ENCODE measurements at regions of chr10 and their contacts with region 1.

Region 1: DNA sequence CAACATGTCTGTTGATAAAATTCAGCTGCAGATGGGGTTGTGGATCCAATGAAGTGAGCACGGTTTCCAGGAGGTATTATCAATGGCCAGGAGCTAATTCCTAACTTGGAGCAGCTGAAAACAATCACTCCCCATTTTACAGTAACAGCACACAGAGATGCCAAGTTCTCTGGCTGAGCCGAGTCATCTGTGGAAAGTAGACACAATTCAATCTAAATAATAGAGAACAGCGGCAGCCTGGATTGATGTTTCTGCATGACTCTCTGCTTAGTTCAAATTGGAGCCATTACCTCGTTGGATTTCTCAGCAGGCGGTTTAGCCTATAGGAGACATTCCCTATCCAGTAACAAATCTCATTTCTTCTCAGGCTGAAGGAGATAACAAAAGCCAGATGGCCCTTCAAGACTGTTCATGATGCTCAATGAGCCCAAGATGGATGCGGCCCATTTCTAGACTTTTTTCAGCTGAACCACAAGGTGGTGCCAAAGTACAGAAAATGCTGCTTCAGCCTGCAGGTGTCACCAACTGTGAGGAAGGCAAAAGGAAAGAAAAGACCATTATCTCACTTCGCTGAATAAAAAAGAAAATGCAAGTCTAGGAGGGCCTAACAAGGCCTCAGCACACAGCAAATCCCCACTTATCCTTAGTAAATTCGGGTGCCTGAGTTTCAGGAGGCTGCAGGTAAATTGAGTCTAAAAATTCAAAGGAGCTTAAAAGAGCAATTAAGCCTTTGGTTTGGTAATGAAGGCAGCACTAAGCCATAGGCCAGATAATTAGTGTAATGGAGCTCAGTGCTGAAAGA is 83.7 kb downstream of the SLC16A9 start:
- DNase-seq: peak; percentile 66
- H3K4me3 Mint-ChIP-seq: no peak overlapping the region
- H3K27ac Mint-ChIP-seq: no peak overlapping the region
- H3K4me1 Mint-ChIP-seq: peaks cover 5% of the 10 kb centered on the region
- H3K27me3 Mint-ChIP-seq: peaks cover 4% of the 10 kb centered on the region
- CTCF ChIP-seq: peak; percentile 81

Region 2: GRCh38 chr10:58531084-58531695 is 1094.7 kb before region 1 on chr10:
- CTCF ChIA-PET with region 1: interaction called, 3 read pairs
- POLR2A ChIA-PET with region 1: no interaction called
- intact Hi-C with region 1: loop called (anchors 10 kb)
- DNase-seq: peak; percentile 81
- H3K4me3 Mint-ChIP-seq: no peak overlapping the region
- H3K27ac Mint-ChIP-seq: peak overlapping the region; percentile 87
- H3K4me1 Mint-ChIP-seq: peaks cover 24% of the 10 kb centered on the region
- H3K27me3 Mint-ChIP-seq: no peaks in the 10 kb centered on the region
- CTCF ChIP-seq: peak; percentile 84

Region 3: DNA sequence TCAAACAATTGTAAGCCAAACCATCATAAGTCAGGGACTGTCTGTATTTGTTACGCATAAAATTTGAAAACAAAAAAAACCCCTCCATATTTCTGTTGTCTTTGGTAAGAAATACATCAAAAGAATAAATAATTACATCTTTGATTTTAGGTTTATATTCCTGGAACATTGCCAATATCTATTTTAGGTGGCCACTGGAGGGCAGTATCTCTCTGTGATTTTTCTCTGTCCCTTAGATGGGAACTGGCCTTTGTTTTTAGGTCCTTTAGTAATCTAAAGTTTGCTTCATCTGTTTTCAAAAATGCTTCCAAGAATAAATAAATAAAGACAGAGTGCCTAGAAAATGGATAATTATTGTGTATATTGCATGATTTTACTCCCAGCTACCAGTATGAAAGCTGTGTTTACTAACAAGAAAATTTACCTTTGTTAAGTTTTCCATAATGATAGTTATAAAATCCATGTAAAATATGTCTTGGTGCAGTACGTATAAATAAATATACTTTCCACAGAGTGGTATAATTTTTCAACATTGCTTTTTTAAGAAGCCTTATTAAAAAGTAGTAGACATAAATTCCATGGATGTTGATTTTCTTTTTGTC is 385.2 kb before region 1 on chr10:
- CTCF ChIA-PET with region 1: interaction called, 92 read pairs
- POLR2A ChIA-PET with region 1: interaction called, 3 read pairs
- intact Hi-C with region 1: loop called (anchors 2 kb)
- DNase-seq: peak; percentile 56
- H3K4me3 Mint-ChIP-seq: no peak overlapping the region
- H3K27ac Mint-ChIP-seq: no peak overlapping the region
- H3K4me1 Mint-ChIP-seq: no peaks in the 10 kb centered on the region
- H3K27me3 Mint-ChIP-seq: peaks cover 79% of the 10 kb centered on the region
- CTCF ChIP-seq: peak; percentile 58

Region 4: DNA sequence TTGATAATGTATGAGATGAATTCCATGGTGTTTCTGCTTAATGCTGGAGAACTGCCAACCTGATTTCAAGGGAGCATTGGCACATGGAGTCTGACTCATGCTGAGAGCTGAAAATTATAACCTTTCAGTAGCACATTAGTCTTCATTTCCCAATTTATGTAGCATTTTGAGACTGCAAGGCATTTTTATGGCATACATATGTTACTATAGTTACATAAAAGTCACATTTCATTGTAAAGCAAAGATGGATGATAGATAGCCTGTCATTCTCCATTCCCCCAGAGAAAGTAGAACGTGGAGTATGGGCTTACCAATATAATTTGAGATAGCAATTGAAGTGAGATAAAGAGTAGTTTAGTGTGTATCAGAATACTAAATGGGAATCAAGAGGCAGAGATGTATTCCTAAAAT is 19.4 kb before region 1 on chr10:
- CTCF ChIA-PET with region 1: interaction called, 31 read pairs
- POLR2A ChIA-PET with region 1: no interaction called
- intact Hi-C with region 1: no loop called
- DNase-seq: peak; percentile 79
- H3K4me3 Mint-ChIP-seq: no peak overlapping the region
- H3K27ac Mint-ChIP-seq: no peak overlapping the region
- H3K4me1 Mint-ChIP-seq: peaks cover 10% of the 10 kb centered on the region
- H3K27me3 Mint-ChIP-seq: no peaks in the 10 kb centered on the region
- CTCF ChIP-seq: no peak

Region 5: GRCh38 chr10:59830601-59831259 is 204.8 kb after region 1 on chr10:
- CTCF ChIA-PET with region 1: interaction called, 63 read pairs
- POLR2A ChIA-PET with region 1: no interaction called
- intact Hi-C with region 1: loop called (anchors 1 kb)
- DNase-seq: peak; percentile 65
- H3K4me3 Mint-ChIP-seq: no peak overlapping the region
- H3K27ac Mint-ChIP-seq: no peak overlapping the region
- H3K4me1 Mint-ChIP-seq: no peaks in the 10 kb centered on the region
- H3K27me3 Mint-ChIP-seq: no peaks in the 10 kb centered on the region
- CTCF ChIP-seq: peak; percentile 70

Region 6: GRCh38 chr10:59960751-59961150 is 334.8 kb after region 1 on chr10:
- CTCF ChIA-PET with region 1: no interaction called
- POLR2A ChIA-PET with region 1: no interaction called
- intact Hi-C with region 1: no loop called
- DNase-seq: no peak
- H3K4me3 Mint-ChIP-seq: no peak overlapping the region
- H3K27ac Mint-ChIP-seq: no peak overlapping the region
- H3K4me1 Mint-ChIP-seq: peaks cover 5% of the 10 kb centered on the region
- H3K27me3 Mint-ChIP-seq: no peaks in the 10 kb centered on the region
- CTCF ChIP-seq: no peak

Region 7: GRCh38 chr10:60048091-60048501 is 422.2 kb after region 1 on chr10:
- CTCF ChIA-PET with region 1: interaction called, 30 read pairs
- POLR2A ChIA-PET with region 1: no interaction called
- intact Hi-C with region 1: loop called (anchors 1 kb)
- DNase-seq: peak; percentile 44
- H3K4me3 Mint-ChIP-seq: no peak overlapping the region
- H3K27ac Mint-ChIP-seq: no peak overlapping the region
- H3K4me1 Mint-ChIP-seq: no peaks in the 10 kb centered on the region
- H3K27me3 Mint-ChIP-seq: no peaks in the 10 kb centered on the region
- CTCF ChIP-seq: peak; percentile 18

Region 8: GRCh38 chr10:60508037-60508436 is 882.1 kb after region 1 on chr10:
- CTCF ChIA-PET with region 1: no interaction called
- POLR2A ChIA-PET with region 1: no interaction called
- intact Hi-C with region 1: no loop called
- DNase-seq: no peak
- H3K4me3 Mint-ChIP-seq: no peak overlapping the region
- H3K27ac Mint-ChIP-seq: no peak overlapping the region
- H3K4me1 Mint-ChIP-seq: peaks cover 7% of the 10 kb centered on the region
- H3K27me3 Mint-ChIP-seq: no peaks in the 10 kb centered on the region
- CTCF ChIP-seq: no peak

Measured in MCF 10A (cell line).